H1 (cell line): ENCODE measurements at regions of chr20 and their contacts with region 1.

Region 1: DNA sequence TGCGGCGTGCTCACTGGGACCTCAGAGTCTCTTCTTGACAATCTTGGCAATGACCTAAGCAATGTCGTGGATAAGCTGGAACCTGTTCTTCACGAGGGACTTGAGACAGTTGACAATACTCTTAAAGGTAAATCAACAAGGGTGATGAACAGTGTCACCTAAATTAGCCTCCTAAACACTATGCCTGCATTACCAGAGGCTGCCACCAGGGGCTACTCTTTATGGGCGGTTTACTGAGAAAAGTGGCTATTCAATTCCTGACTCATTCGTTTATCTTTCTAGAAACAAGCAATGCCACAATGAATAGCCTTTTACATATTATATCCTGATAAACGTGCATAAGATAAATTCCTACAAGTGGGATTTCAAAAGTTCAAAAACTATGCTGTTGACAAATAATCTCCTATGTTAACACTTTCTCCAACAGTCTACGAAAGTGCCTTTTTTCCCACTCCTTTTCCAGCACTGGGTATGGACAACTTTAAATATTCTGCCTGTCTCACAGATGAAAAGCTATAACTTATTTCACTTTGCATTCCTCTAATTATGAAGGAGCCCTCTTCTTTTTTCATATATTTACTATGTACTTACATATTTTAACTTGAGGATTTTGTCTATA is 1.3 kb downstream of the BPIFA2 start:
- DNase-seq: peak in 1 of 2 experiments; percentile 81
- H3K4me3 ChIP-seq: no peak overlapping the region
- H3K27ac ChIP-seq: no peak overlapping the region
- H3K4me1 ChIP-seq: no peaks in the 10 kb centered on the region
- H3K27me3 ChIP-seq: no peaks in the 10 kb centered on the region
- CTCF ChIP-seq: peak in 2 of 3 experiments; percentile 39 to 74; a peak in 3 of 4 replicates
- EP300 ChIP-seq: no peak
- POLR2A ChIP-seq: no peak
- RAD21 ChIP-seq: peak in 1 of 2 experiments; percentile 33; a peak in 3 of 4 replicates

Region 2: DNA sequence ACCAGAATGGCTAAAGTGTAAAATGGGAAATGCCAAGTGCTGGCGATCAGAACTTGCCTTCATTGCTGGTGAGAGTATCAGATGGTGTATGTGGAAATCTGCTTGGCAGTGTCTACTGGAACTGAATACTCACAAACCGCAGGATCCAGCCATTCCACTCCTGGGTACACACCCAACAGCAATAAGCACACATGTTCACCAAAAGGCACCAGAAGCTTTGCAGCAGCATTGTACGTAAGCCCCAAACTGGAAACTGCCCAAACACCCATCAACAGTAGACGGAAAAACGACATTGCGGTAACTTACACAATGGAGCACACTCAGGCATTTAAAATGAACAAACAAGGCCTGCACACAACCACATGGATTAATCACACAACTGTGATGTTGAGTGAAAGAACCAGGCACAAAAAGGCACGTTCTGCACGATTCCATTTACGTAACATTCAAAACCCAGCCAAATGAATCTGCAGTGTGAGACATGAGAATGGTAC is 38.7 kb before region 1 on chr20:
- CTCF ChIA-PET with region 1: no interaction called
- POLR2A ChIA-PET with region 1: no interaction called
- DNase-seq: no peak
- H3K4me3 ChIP-seq: no peak overlapping the region
- H3K27ac ChIP-seq: no peak overlapping the region
- H3K4me1 ChIP-seq: peaks cover 0 to 9% (median 3%) of the 10 kb centered on the region in 4 experiments; a peak in 2 of 7 replicates
- H3K27me3 ChIP-seq: no peaks in the 10 kb centered on the region
- CTCF ChIP-seq: no peak
- EP300 ChIP-seq: no peak
- POLR2A ChIP-seq: no peak
- RAD21 ChIP-seq: no peak

Region 3: GRCh38 chr20:33148040-33148439 is 21.2 kb before region 1 on chr20:
- CTCF ChIA-PET with region 1: interaction called, 11 read pairs
- POLR2A ChIA-PET with region 1: no interaction called
- DNase-seq: no peak
- H3K4me3 ChIP-seq: no peak overlapping the region
- H3K27ac ChIP-seq: no peak overlapping the region
- H3K4me1 ChIP-seq: no peaks in the 10 kb centered on the region
- H3K27me3 ChIP-seq: no peaks in the 10 kb centered on the region
- CTCF ChIP-seq: no peak
- EP300 ChIP-seq: no peak
- POLR2A ChIP-seq: no peak
- RAD21 ChIP-seq: no peak